ENCODE measurements at regions of chr12 and their contacts with region 1.

Region 1: DNA sequence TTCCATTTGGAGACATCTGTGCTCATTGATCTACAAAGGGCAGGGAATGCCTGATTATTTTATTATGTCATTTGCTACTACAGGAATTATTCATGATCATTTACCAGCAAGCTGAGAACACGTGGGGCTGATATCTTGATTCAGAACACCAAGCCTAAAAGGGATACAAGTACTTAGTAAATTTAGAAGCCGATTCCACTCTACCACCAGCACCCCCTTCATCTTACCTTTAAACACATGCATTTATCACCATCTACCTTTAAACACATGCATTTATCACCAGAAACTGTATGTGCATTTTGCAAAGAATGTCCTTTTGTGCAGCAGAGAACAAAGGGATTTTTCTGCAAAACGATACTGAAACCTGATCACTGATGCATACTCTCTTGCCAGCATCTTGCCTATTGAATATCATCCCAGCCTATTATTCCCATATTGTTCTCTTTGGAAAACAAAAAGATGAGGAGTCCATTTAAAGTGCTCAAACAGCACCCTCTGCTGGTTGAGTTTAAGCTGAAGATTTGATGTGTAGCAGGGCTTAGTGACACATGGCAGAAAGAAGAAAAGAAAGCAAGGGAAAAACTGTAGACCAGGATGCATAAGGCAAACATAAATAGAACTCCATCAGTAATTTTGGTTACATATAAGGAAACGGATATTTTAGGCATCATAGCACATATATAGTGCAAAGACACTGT is 132.6 kb upstream of the PLEKHG7 start:
- DNase-seq: peak; percentile 75
- ATAC-seq: peak; percentile 72
- H3K4me3 ChIP-seq: no peak overlapping the region
- H3K27ac ChIP-seq: no peak overlapping the region
- H3K4me1 ChIP-seq: no peaks in the 10 kb centered on the region
- H3K27me3 ChIP-seq: no peaks in the 10 kb centered on the region
- CTCF ChIP-seq: peak; percentile 58 to 86 (median 81); a peak in 5 of 6 replicates
- POLR2A ChIP-seq: no peak
- RAD21 ChIP-seq: peak; percentile 92

Region 2: DNA sequence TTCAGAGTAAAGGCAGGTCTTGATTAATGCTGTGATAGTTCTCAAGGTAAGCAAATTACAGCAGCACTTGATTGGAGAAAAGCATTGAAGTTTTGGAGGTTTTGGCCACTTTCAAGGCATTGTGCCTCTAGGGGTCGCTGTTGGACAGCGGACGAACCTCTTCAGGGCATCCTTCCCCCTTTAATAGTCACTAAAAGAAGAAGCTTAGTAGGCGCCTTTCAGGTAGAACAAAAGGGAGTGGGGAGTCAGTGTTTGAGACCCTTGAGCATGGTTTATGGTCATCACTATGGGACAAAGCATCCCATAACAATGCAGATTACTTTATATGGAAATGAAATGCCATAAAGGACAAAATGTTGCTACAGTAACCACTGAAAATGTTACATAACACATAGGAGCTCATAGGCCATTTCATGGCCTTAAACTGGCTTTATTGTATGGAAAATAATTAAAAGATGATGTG is 1188.1 kb before region 1 on chr12:
- CTCF ChIA-PET with region 1: interaction called, 14 read pairs
- POLR2A ChIA-PET with region 1: no interaction called
- RAD21 ChIA-PET with region 1: interaction called in 1 of 2 experiments, 3 read pairs
- intact Hi-C with region 1: loop called (anchors 1 kb)
- DNase-seq: peak; percentile 66
- ATAC-seq: peak; percentile 80
- H3K4me3 ChIP-seq: no peak overlapping the region
- H3K27ac ChIP-seq: no peak overlapping the region
- H3K4me1 ChIP-seq: peaks cover 0 to 5% of the 10 kb centered on the region in 2 experiments; a peak in 2 of 4 replicates
- H3K27me3 ChIP-seq: no peaks in the 10 kb centered on the region
- CTCF ChIP-seq: peak; percentile 62 to 88 (median 82); a peak in 5 of 6 replicates
- POLR2A ChIP-seq: no peak
- RAD21 ChIP-seq: peak; percentile 91

Region 3: GRCh38 chr12:91811481-91812287 is 758.5 kb before region 1 on chr12:
- CTCF ChIA-PET with region 1: interaction called, 8 read pairs
- POLR2A ChIA-PET with region 1: no interaction called
- RAD21 ChIA-PET with region 1: no interaction called
- intact Hi-C with region 1: loop called (anchors 1 kb)
- DNase-seq: peak; percentile 53
- ATAC-seq: peak; percentile 84
- H3K4me3 ChIP-seq: no peak overlapping the region
- H3K27ac ChIP-seq: no peak overlapping the region
- H3K4me1 ChIP-seq: no peaks in the 10 kb centered on the region
- H3K27me3 ChIP-seq: no peaks in the 10 kb centered on the region
- CTCF ChIP-seq: peak; percentile 45 to 87 (median 81); a peak in 5 of 6 replicates
- POLR2A ChIP-seq: no peak
- RAD21 ChIP-seq: peak; percentile 67

Region 4: DNA sequence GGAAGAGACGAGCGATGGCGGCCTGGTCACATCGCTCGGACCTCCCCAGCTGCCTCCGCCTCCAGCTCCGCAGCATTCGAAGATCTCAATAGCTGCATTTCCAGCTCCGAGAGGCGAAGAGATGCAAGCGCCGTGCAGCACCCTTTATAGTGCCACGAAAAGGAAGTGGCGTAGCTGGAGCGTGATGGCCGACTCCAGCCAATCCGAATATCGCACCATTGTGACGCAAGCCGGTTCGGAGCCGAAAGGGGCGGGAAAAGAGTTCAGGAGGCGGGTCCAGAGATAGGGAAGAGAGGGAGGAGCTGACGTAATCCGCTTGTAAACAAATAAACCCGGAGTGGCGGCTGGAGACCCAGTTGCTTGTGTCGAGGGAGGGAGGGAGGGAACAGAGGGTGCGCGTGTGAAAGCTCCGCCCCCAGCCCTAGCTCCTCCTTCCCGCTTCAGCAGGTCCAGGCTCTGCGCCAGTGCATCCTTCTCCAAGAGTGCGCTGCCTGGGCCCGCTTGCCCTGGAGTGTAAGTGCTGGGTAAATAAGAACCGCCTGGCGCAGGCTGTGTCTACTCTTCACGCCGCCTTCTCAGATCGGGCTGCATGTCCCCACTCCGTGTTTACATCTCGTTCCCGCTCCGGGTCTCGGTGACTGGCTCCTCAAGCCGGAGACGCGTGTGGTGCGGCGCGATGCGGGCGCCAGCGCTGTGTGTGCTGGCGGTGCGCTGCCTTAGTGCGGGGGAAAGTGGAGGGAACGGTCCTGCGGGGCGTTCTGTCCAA is 424.3 kb before region 1 on chr12 and contains the start of gene BTG1:
- CTCF ChIA-PET with region 1: no interaction called
- POLR2A ChIA-PET with region 1: interaction called, 5 read pairs
- RAD21 ChIA-PET with region 1: no interaction called
- intact Hi-C with region 1: loop called (anchors 2 kb)
- DNase-seq: peak; percentile 99
- ATAC-seq: peak; percentile 84
- H3K4me3 ChIP-seq: peak within 1 kb of the TSS; percentile 54 to 78
- H3K27ac ChIP-seq: peak within 1 kb of the TSS; percentile 80
- H3K4me1 ChIP-seq: peaks cover 5 to 18% of the 10 kb centered on the region in 2 experiments; a peak in 3 of 4 replicates
- H3K27me3 ChIP-seq: no peaks in the 10 kb centered on the region
- CTCF ChIP-seq: no peak
- POLR2A ChIP-seq: peak; percentile 99
- RAD21 ChIP-seq: peak; percentile 25; the same call in 1 of the 2 replicates
- total RNA-seq, gene BTG1: 57.3 TPM

Region 5: DNA sequence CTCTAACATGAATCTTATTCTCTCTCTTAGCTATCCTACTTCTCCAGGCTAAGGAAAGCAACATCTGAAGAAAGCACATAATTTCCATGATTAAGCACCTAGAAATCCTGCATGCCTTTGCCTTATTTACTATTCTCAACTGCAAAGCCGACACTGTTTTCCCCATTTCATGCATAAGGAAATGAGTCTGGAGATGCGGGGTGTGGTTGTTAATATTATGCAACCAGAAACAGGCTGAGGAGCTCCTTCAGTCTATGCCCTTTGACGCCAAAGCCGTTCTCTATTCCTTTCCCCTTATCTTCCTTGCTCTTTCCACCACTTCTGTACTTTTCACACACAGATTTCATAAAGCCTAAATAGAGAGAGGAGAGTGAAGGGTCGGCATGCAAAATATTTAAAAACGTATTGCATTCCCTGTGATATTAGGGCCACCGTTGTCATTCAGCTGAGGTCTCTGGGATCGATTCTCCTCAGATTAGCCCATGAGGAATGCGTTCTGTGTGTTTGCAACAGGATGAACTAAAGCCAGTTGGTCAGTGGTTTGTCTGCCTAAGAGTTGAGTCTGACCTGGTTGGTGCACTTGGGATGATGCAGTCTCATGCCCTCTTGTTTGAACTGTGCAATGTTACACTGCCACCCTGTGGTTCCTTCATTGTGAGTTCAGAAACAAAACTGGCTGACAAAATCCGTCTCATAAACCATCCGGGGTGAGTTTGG is 79.5 kb after region 1 on chr12:
- CTCF ChIA-PET with region 1: no interaction called
- POLR2A ChIA-PET with region 1: no interaction called
- RAD21 ChIA-PET with region 1: no interaction called
- intact Hi-C with region 1: loop called (anchors 1 kb)
- DNase-seq: peak; percentile 76
- ATAC-seq: peak; percentile 97
- H3K4me3 ChIP-seq: no peak overlapping the region
- H3K27ac ChIP-seq: no peak overlapping the region
- H3K4me1 ChIP-seq: no peaks in the 10 kb centered on the region
- H3K27me3 ChIP-seq: no peaks in the 10 kb centered on the region
- CTCF ChIP-seq: peak; percentile 67 to 83 (median 77)
- POLR2A ChIP-seq: no peak
- RAD21 ChIP-seq: peak; percentile 91

Region 6: DNA sequence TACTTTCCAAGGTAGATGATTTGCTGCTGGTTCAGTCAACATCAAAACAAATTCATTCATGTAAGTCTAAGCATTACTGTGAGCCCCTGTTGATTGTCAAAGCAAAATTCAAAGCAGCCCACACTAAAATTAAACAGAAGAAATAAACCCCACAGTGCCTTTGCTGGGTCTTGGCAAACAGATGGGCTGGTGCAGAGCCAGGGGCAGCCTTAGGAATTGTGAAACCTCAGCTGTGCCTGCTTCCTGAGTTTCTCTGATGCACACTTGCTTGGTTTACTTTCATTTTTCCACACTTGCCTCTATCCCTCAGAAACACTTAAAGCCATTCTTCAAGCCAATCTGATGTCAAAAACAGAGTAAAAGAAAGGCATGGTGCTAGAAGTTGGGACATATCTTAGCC is 126.0 kb after region 1 on chr12:
- CTCF ChIA-PET with region 1: no interaction called
- POLR2A ChIA-PET with region 1: no interaction called
- RAD21 ChIA-PET with region 1: no interaction called
- intact Hi-C with region 1: no loop called
- DNase-seq: no peak
- ATAC-seq: no peak
- H3K4me3 ChIP-seq: no peak overlapping the region
- H3K27ac ChIP-seq: no peak overlapping the region
- H3K4me1 ChIP-seq: no peaks in the 10 kb centered on the region
- H3K27me3 ChIP-seq: no peaks in the 10 kb centered on the region
- CTCF ChIP-seq: no peak
- POLR2A ChIP-seq: no peak
- RAD21 ChIP-seq: no peak